Mammary epithelial cell (primary cell): ENCODE measurements at regions of chr9 and their contacts with region 1.

Region 1: DNA sequence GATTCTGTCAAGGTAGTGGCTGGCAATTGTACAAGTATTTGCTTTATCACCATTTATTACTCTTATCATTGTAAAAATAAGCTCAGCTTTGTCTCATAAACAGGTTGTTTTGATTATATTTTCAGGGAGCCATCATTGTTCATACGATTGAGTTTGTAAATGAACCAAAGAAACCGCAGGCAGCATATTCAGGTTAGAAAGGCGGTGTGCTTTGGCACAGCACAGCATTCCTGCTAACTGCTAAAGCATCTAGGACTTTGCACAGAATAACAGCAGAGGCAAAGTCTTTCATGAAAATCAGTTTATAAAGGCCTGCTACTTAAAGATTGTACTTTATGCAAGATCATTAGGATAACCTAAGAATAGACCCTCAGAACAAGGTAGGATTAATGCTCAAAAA is 281.5 kb upstream of the SLC24A2 start:
- DNase-seq: no peak
- H3K4me3 ChIP-seq: no peak overlapping the region
- H3K27ac ChIP-seq: no peak overlapping the region
- H3K4me1 ChIP-seq: no peaks in the 10 kb centered on the region
- H3K27me3 ChIP-seq: no peaks in the 10 kb centered on the region
- CTCF ChIP-seq: no peak

Region 2: DNA sequence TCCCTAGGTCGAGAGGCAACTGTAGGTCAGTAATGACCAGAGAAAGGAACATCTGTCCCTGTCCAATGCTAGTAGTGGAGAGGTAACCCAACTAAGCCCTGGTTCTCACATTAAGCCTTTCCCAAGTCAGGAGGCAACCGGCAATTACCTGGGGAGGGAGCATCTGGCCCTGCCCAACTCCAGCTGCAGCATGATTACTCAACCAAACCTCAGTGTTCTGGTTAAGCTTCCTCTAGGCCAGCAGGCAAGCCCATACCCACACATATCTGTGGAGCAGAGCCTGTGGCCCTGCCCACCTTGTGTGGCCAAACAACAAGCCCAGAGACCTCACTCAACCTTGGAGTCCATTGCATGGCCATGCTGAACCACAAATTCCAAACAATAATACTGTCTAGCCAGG is 60.7 kb before region 1 on chr9:
- CTCF ChIA-PET with region 1: no interaction called
- dilution Hi-C with region 1: loop called (anchors 5 kb)
- in situ Hi-C with region 1: no loop called
- intact Hi-C with region 1: no loop called
- DNase-seq: peak; percentile 55
- H3K4me3 ChIP-seq: no peak overlapping the region
- H3K27ac ChIP-seq: no peak overlapping the region
- H3K4me1 ChIP-seq: no peaks in the 10 kb centered on the region
- H3K27me3 ChIP-seq: no peaks in the 10 kb centered on the region
- CTCF ChIP-seq: no peak